Activated CD8-positive, alpha-beta T cell treated with anti-CD3 and anti-CD28 coated beads, Interleukin-2, amount 10 ng/mL, durations not matched to agents 7 days and 5 days (primary cell): ENCODE measurements at regions of chr10 and their contacts with region 1.

Region 1: GRCh38 chr10:28381903-28382347 is 79.1 kb upstream of the MPP7 start:
- DNase-seq: peak; percentile 91
- ATAC-seq: peak; percentile 96
- H3K4me3 Mint-ChIP-seq: no peak overlapping the region
- H3K27ac Mint-ChIP-seq: no peak overlapping the region
- H3K4me1 Mint-ChIP-seq: peaks cover 27% of the 10 kb centered on the region
- H3K27me3 Mint-ChIP-seq: peaks cover 4% of the 10 kb centered on the region

Region 2: DNA sequence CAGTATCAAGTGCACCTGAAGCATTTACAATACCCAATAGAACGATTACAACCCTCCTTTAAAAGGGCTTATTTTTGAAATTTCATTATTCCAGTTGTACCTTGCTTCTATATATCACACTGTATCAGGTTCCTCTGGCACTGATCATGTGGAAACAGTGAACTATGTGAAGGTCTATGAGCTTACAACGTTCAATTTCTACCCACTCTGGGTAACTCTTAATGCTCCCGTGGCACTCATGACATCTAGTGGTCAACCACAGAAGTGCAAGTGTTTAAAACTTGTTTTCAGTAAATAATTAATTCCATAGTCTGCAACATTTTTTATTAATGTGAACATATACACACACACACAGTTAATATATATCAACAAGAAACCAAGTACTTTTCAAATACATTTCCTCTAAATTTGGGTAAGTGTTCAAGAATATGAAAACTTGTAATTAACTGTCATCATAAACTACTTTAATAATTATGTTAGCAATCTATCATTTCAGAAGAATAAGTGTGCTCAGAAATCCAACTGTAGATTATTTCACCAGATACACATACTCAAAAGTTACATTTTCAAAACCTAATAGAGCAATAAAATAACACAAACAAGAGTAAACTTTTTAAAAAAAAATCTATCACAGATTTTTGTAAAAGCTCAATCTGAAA is 140.1 kb before region 1 on chr10:
- CTCF ChIA-PET with region 1: interaction called, 44 read pairs
- POLR2A ChIA-PET with region 1: no interaction called
- DNase-seq: peak; percentile 60
- ATAC-seq: peak; percentile 57
- H3K4me3 Mint-ChIP-seq: no peak overlapping the region
- H3K27ac Mint-ChIP-seq: no peak overlapping the region
- H3K4me1 Mint-ChIP-seq: peaks cover 11% of the 10 kb centered on the region
- H3K27me3 Mint-ChIP-seq: no peaks in the 10 kb centered on the region

Region 3: DNA sequence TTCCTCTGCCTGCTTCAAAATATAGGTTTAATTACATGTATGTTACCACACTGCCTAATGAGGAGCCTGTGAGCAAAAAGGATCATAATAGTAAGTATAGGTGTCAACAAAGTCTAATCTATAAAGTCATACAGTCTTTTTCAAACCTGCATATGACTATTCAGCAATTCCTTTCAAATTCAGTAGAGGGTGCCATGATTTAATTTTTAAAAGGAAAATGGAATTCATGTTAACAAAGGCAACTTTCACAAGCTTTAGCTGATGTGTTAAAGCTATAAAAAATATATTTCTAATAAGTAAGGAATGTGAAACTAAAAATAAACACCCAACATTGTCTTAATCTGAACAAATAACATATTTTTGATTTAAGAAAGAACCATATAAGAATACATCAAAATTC is 131.1 kb before region 1 on chr10:
- CTCF ChIA-PET with region 1: interaction called, 87 read pairs
- POLR2A ChIA-PET with region 1: interaction called, 5 read pairs
- DNase-seq: no peak
- ATAC-seq: no peak
- H3K4me3 Mint-ChIP-seq: no peak overlapping the region
- H3K27ac Mint-ChIP-seq: no peak overlapping the region
- H3K4me1 Mint-ChIP-seq: peaks cover 16% of the 10 kb centered on the region
- H3K27me3 Mint-ChIP-seq: no peaks in the 10 kb centered on the region

Region 4: DNA sequence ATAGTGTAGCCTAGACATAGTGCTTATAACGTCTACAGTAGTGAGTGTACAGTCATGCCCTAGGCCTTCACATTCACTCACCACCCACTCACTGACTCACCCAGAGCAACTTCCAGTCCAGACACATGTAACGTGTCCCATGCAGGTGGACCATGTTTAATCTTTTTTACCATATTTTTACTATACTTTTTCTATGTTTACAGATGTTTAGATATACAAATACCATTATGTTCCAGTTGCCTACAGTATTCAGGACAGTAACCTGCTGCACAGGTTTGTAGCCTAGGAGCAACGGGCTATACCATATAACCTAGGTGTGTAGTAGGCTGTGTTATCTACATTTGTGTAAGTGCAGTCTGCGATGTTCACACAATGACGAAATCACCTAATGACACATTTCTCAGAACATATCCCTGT is 90.0 kb before region 1 on chr10:
- CTCF ChIA-PET with region 1: interaction called, 11 read pairs
- POLR2A ChIA-PET with region 1: no interaction called
- DNase-seq: no peak
- ATAC-seq: no peak
- H3K4me3 Mint-ChIP-seq: no peak overlapping the region
- H3K27ac Mint-ChIP-seq: no peak overlapping the region
- H3K4me1 Mint-ChIP-seq: peaks cover 17% of the 10 kb centered on the region
- H3K27me3 Mint-ChIP-seq: no peaks in the 10 kb centered on the region

Region 5: DNA sequence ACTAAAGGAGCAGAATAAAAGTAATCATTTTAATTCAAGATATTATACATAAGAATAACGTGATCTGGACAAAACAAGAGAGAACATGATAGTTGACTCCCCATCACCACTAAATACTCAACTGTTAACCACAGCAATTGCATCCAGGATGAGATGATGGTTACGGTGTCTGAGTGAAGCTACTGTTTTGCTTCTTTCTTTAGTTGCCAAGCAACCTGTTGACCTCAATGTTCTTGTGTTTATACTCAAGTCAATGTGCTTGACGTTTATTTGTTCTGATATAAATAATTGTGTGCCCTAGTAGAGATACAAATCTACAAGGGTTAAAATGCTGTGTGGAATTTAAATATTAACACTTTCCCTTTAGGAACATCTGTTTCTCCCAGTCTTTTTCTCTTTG is 47.6 kb before region 1 on chr10:
- CTCF ChIA-PET with region 1: interaction called, 112 read pairs
- POLR2A ChIA-PET with region 1: interaction called, 43 read pairs
- DNase-seq: peak; percentile 82
- ATAC-seq: peak; percentile 70
- H3K4me3 Mint-ChIP-seq: peak overlapping the region; percentile 89
- H3K27ac Mint-ChIP-seq: peak overlapping the region; percentile 100
- H3K4me1 Mint-ChIP-seq: peaks cover 68% of the 10 kb centered on the region
- H3K27me3 Mint-ChIP-seq: no peaks in the 10 kb centered on the region

Region 6: DNA sequence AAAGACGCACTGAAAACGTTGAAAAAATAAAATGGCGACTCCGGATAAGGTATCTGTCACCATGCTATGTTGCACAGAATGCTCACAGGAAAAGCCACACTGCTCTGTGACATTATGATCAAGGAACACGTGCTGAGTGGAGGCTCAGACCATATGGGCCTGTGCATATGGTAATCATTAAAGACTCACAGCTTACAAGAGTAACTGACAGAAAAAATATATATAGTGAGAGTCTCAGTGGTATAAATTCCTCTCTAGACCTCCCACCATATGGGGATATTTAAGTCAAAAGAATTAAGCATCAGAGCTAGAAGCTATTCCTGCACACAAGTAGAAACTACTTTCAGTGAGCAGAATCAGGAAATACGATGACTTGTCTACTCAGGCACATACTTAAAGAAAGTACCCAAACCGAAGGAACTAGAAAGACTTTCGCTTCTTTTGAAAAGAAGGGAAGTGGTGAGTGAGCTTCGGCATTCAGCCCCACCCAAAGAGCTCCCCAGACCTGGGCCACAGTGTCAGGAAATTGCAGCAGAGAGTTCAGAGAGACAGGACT is 13.9 kb before region 1 on chr10:
- CTCF ChIA-PET with region 1: interaction called, 81 read pairs
- POLR2A ChIA-PET with region 1: interaction called, 20 read pairs
- DNase-seq: peak; percentile 85
- ATAC-seq: peak; percentile 97
- H3K4me3 Mint-ChIP-seq: peak overlapping the region; percentile 57
- H3K27ac Mint-ChIP-seq: peak overlapping the region; percentile 93
- H3K4me1 Mint-ChIP-seq: peaks cover 46% of the 10 kb centered on the region
- H3K27me3 Mint-ChIP-seq: no peaks in the 10 kb centered on the region

Region 7: GRCh38 chr10:28393966-28394568 is 12.1 kb after region 1 on chr10:
- CTCF ChIA-PET with region 1: interaction called, 54 read pairs
- POLR2A ChIA-PET with region 1: no interaction called
- DNase-seq: peak; percentile 79
- ATAC-seq: peak; percentile 95
- H3K4me3 Mint-ChIP-seq: no peak overlapping the region
- H3K27ac Mint-ChIP-seq: no peak overlapping the region
- H3K4me1 Mint-ChIP-seq: peaks cover 4% of the 10 kb centered on the region
- H3K27me3 Mint-ChIP-seq: peaks cover 5% of the 10 kb centered on the region